WTC11 (cell line): ENCODE measurements at regions of chr1 and their contacts with region 1.

Region 1: GRCh38 chr1:18875107-18875795 is 15.8 kb upstream of the TAS1R2 start:
- DNase-seq: peak; percentile 95
- ATAC-seq: peak; percentile 89
- H3K4me3 Mint-ChIP-seq: no peak overlapping the region
- H3K27ac Mint-ChIP-seq: no peak overlapping the region
- H3K4me1 Mint-ChIP-seq: no peaks in the 10 kb centered on the region; the same call in 1 of the 2 replicates
- H3K27me3 Mint-ChIP-seq: no peaks in the 10 kb centered on the region
- CTCF ChIP-seq: peak; percentile 93

Region 2: DNA sequence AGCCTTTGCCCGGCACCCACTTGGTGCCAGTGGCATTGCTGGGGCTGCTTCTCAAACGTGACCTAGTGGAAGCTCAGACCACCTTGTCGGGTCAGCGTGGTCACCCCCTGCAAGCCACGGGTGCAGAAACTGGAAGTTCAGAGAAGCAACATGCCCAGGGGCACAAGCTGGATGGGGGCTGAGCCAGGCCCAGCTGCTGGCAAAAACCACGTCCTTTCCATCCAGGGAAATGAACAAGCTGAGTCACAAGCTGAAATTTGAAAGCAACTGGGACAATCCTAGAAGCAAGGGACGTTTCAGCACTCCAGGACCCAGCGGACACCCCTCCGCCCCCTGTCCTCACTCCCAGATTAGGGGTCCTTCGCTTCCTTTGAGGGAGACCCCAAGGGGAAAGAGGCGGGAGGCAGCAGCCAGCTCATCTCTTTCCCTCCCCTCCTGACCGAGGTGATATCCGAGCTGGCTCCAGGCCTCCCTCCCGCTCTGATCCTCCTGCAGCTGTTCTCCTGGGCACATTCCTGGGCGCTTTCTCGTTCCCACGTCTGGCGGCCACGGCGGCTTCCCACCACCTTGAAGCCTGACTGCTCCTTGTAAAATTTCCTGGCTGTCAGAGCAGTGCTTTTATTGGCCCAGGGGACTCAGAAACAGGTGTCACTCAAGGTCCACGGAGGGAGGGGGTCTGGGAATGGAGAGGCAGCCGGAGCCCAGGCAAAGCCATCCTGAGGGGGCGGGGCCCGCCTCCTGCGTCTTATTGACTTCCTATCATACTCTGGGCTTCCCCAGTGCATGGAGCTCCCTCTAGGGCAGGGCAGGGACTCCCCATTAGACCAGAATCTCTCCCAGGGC is 181.8 kb before region 1 on chr1:
- CTCF ChIA-PET with region 1: interaction called, 10 read pairs
- POLR2A ChIA-PET with region 1: no interaction called
- DNase-seq: peak; percentile 89
- ATAC-seq: peak; percentile 95
- H3K4me3 Mint-ChIP-seq: peak overlapping the region; percentile 69
- H3K27ac Mint-ChIP-seq: 0 out of 2 replicates have a peak overlapping the region, but pooled peaks have one; percentile 41
- H3K4me1 Mint-ChIP-seq: peaks cover 16% of the 10 kb centered on the region
- H3K27me3 Mint-ChIP-seq: peaks cover 33% of the 10 kb centered on the region
- CTCF ChIP-seq: no peak

Region 3: GRCh38 chr1:18751425-18751824 is 123.8 kb before region 1 on chr1:
- CTCF ChIA-PET with region 1: no interaction called
- POLR2A ChIA-PET with region 1: no interaction called
- DNase-seq: no peak
- ATAC-seq: no peak
- H3K4me3 Mint-ChIP-seq: no peak overlapping the region
- H3K27ac Mint-ChIP-seq: no peak overlapping the region
- H3K4me1 Mint-ChIP-seq: no peaks in the 10 kb centered on the region
- H3K27me3 Mint-ChIP-seq: peaks cover 90% of the 10 kb centered on the region
- CTCF ChIP-seq: no peak

Region 4: GRCh38 chr1:18830596-18830995 is 44.7 kb before region 1 on chr1:
- CTCF ChIA-PET with region 1: no interaction called
- POLR2A ChIA-PET with region 1: no interaction called
- DNase-seq: no peak
- ATAC-seq: no peak
- H3K4me3 Mint-ChIP-seq: no peak overlapping the region
- H3K27ac Mint-ChIP-seq: no peak overlapping the region
- H3K4me1 Mint-ChIP-seq: no peaks in the 10 kb centered on the region
- H3K27me3 Mint-ChIP-seq: peaks cover 32% of the 10 kb centered on the region
- CTCF ChIP-seq: no peak